Activated CD4-positive, alpha-beta T cell treated with anti-CD3 and anti-CD28 coated beads for 36 hours (primary cell): ENCODE measurements at regions of chr11 and their contacts with region 1.

Region 1: DNA sequence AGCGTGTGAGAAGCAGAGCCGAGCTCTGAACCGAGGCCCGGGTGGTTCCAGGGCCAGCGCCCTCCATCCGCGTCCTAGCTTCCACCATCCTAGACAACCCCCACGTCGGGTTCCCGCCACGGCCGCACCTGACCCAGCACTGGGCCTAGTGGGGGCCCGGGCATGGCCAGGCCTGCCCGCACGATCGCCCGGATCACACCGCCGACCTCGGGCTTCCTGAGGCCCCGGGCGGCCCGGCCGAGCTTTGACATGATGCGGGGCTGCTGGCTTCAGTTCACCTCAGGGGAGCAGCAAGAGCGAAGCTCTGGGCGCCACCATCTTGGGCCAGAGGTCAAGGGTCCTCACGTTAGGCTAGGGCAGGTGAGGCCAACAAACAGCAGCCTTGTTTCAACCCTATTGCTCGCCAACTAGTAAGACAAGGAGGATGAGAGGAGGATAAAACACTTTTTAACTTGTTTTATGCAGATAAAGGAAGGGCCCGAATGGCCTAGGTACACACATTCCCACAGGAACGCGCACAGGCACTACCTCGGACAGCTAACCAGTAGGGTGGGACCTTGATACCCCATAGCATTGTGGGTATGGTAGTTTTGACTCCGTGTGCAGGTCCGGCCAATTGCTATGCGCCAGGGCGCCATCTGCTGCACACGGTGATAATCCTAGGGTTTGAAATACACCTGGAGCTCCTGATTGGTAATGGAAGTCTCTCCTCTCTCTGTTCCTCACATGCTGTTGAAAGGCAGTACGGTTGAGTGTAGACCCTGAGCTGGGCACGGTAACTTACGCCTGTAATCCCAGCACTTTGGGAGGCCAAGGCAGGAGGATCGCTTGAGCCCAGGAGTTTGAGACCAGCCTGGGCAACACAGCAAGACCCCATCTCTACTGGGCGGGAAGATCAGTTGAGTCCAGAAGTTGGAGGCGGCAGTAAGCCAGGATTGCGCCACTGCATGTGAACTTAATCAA is at the start of gene MRPL11:
- DNase-seq: peak; percentile 94
- ATAC-seq: peak; percentile 99
- H3K4me3 Mint-ChIP-seq: peak within 1 kb of the TSS; percentile 85
- H3K27ac Mint-ChIP-seq: peak within 1 kb of the TSS; percentile 98
- H3K4me1 Mint-ChIP-seq: peaks cover 8% of the 10 kb centered on the region
- H3K27me3 Mint-ChIP-seq: no peaks in the 10 kb centered on the region
- total RNA-seq, gene MRPL11: 115 to 120 TPM

Region 2: GRCh38 chr11:66207876-66208275 is 230.9 kb before region 1 on chr11:
- CTCF ChIA-PET with region 1: no interaction called
- POLR2A ChIA-PET with region 1: no interaction called
- intact Hi-C with region 1: no loop called
- DNase-seq: no peak
- ATAC-seq: no peak
- H3K4me3 Mint-ChIP-seq: no peak overlapping the region
- H3K27ac Mint-ChIP-seq: no peak overlapping the region
- H3K4me1 Mint-ChIP-seq: peaks cover 4% of the 10 kb centered on the region
- H3K27me3 Mint-ChIP-seq: no peaks in the 10 kb centered on the region

Region 3: DNA sequence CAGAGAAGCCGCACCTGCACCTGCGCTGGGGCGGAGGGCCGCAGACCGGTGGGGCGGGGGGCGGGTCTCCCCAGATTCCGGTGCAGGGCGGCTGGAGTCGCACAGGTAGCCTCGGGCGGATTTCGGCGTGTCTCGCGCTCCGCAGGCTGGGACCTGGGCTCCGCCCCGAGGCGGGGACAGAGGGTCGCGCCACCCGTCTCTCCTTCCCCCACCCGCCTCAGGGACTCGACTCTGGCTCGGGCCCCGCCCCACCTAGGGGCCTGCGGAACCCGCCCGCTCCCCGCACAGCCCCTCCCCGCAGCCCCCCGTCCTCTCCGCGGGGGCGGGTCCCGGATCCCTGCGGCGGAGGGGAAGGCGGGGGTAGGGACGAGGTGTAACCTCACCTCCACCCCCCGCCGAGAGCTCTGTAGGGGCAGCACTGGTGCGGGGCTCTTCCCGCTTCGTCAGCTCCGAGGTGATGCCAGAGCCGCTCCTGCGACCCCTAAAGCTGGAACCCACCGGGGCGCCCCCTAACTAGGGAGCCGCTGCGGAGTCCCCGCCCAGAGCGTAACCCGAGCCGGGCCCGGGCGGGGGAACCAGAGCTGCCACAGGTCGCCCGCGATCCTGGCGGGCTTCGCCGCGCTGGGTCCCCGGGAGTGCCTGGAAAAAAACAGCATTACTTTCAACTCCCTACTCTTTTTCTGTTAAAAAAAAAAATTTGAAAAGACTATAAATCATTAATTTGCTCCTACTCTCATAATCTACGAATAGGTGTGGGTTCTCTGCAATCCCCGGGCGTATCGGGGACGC is 67.0 kb before region 1 on chr11 and contains the start of gene SLC29A2:
- CTCF ChIA-PET with region 1: interaction called, 3 read pairs
- POLR2A ChIA-PET with region 1: no interaction called
- intact Hi-C with region 1: loop called in 1 of 2 experiments (anchors 1 kb)
- DNase-seq: peak; percentile 92
- ATAC-seq: peak; percentile 87
- H3K4me3 Mint-ChIP-seq: peak within 1 kb of the TSS; percentile 91
- H3K27ac Mint-ChIP-seq: peak within 1 kb of the TSS; percentile 91
- H3K4me1 Mint-ChIP-seq: peaks cover 19% of the 10 kb centered on the region
- H3K27me3 Mint-ChIP-seq: no peaks in the 10 kb centered on the region
- total RNA-seq, gene SLC29A2: 13.6 to 14.4 TPM

Region 4: GRCh38 chr11:66408488-66409214 is 30.1 kb before region 1 on chr11:
- CTCF ChIA-PET with region 1: interaction called, 16 read pairs
- POLR2A ChIA-PET with region 1: no interaction called
- intact Hi-C with region 1: loop called (anchors 1 kb)
- DNase-seq: peak; percentile 97
- ATAC-seq: peak; percentile 86
- H3K4me3 Mint-ChIP-seq: peak overlapping the region; percentile 67
- H3K27ac Mint-ChIP-seq: no peak overlapping the region
- H3K4me1 Mint-ChIP-seq: peaks cover 2% of the 10 kb centered on the region
- H3K27me3 Mint-ChIP-seq: peaks cover 20% of the 10 kb centered on the region

Region 5: DNA sequence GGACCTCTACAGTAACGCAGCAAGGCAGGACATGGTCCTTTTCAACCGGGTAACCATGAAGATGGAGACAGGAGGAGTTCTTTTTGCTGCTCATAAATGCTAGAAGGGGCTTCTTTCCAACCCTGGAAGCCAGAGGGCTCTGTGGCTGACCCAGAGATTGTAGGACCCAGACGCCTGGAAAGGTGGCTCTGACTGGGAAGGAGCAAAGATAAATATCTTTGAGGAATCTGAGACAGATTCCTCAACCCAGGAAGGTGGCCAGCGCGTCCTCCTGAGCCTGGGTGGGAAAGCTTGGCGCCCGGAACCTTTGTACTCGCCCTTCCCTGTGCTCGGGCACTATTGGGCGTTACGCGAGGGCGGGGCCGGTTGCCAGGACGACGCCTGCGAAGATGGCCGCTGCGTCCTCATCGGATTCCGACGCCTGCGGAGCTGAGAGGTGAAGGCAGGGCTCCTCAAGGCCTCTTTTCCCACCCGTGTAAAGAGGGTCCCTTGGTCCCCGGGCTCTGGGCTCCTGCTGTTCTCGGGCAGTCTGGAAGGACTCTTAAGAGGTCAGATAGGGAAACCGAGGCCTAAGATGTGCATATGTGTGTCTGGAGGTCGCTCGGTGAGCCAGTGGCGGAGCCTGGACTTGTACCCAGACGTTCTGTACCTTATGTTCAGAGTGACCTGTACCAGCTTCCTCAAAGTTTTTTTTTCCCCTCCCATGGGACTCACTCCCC is 71.6 kb after region 1 on chr11 and contains the start of gene BBS1:
- CTCF ChIA-PET with region 1: interaction called, 3 read pairs
- POLR2A ChIA-PET with region 1: no interaction called
- intact Hi-C with region 1: loop called in 1 of 2 experiments (anchors 1 kb)
- DNase-seq: peak; percentile 88
- ATAC-seq: peak; percentile 98
- H3K4me3 Mint-ChIP-seq: peak within 1 kb of the TSS; percentile 86
- H3K27ac Mint-ChIP-seq: peak within 1 kb of the TSS; percentile 48
- H3K4me1 Mint-ChIP-seq: peaks cover 10% of the 10 kb centered on the region
- H3K27me3 Mint-ChIP-seq: no peaks in the 10 kb centered on the region
- total RNA-seq, gene BBS1: 9.4 to 10.7 TPM

Region 6: DNA sequence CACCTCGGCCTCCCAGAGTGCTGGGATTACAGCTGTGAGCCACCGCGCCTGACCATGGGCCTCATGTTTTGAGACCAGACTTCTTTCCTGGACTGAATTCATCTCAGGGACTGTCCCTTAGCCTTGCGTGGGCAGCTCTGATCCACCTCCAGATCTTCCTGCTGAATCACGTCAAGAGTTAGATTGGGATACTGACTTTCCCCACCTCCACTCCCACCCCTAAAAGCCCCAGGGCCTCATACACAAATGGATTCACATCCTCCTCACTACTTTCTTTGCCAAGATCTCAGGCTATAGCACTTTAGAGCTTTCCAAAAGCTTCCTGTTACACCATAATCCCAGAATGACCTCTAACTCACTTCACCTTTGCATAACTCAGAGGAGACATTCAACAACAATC is 142.0 kb after region 1 on chr11:
- CTCF ChIA-PET with region 1: no interaction called
- POLR2A ChIA-PET with region 1: no interaction called
- intact Hi-C with region 1: no loop called
- DNase-seq: peak; percentile 34
- ATAC-seq: peak; percentile 14
- H3K4me3 Mint-ChIP-seq: no peak overlapping the region
- H3K27ac Mint-ChIP-seq: no peak overlapping the region
- H3K4me1 Mint-ChIP-seq: peaks cover 16% of the 10 kb centered on the region
- H3K27me3 Mint-ChIP-seq: peaks cover 2% of the 10 kb centered on the region

Region 7: DNA sequence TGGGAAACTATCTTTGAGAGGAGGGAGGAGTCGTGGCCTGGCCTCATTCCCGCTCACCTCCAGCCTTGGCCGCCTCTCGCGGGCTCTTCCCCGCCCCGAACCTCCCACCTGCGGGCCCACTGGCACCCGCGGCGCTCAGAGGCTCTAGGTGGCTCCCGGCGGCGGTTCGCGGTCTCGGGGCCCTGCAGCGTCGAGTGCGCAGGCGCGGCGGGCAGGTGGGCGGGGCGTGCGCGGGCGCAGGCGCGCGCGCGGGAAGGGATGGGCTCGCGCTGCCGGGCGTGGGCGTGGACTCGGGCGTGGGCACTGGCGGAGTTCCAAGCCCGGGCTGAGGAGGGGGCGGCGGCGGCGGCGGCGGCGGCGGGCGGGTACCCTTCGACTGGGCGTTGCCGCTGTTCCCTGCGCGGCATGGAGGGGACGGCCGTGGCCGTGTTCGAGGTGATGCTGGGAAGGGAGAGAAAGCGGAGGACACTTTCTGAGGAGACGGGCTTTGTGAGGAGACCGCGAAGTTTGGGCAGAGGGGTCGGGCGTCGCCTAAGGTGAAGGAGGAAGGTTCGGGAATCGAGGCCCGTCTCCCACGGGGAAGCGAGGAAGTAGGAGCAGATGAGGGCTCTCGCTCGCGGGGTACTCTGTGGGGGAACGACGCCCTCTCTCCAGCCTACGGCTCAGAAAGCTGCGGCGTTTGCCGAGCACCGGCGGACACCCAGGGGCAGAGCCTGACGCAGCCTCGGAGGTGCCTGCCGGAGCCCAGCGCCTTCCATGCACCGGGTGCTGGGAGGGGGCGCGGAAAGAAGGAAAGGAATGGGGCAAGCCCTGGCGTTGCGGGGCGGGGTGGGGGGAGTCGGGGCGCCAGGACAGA is 305.9 kb after region 1 on chr11:
- CTCF ChIA-PET with region 1: no interaction called
- POLR2A ChIA-PET with region 1: no interaction called
- intact Hi-C with region 1: loop called in 1 of 2 experiments (anchors 1 kb)
- DNase-seq: peak; percentile 93
- ATAC-seq: peak; percentile 88
- H3K4me3 Mint-ChIP-seq: peak overlapping the region; percentile 95
- H3K27ac Mint-ChIP-seq: peak overlapping the region; percentile 84
- H3K4me1 Mint-ChIP-seq: peaks cover 7% of the 10 kb centered on the region
- H3K27me3 Mint-ChIP-seq: no peaks in the 10 kb centered on the region